ENCODE measurements at regions of chr20 and their contacts with region 1.

Region 1: GRCh38 chr20:733861-734260 is 34.4 kb downstream of the SLC52A3 start:
- DNase-seq: no peak
- H3K4me3 ChIP-seq: no peak overlapping the region
- H3K27ac ChIP-seq: no peak overlapping the region
- H3K4me1 ChIP-seq: peaks cover 0 to 3% of the 10 kb centered on the region in 2 donors
- H3K27me3 ChIP-seq: no peaks in the 10 kb centered on the region
- CTCF ChIP-seq: no peak
- POLR2A ChIP-seq: no peak

Region 2: DNA sequence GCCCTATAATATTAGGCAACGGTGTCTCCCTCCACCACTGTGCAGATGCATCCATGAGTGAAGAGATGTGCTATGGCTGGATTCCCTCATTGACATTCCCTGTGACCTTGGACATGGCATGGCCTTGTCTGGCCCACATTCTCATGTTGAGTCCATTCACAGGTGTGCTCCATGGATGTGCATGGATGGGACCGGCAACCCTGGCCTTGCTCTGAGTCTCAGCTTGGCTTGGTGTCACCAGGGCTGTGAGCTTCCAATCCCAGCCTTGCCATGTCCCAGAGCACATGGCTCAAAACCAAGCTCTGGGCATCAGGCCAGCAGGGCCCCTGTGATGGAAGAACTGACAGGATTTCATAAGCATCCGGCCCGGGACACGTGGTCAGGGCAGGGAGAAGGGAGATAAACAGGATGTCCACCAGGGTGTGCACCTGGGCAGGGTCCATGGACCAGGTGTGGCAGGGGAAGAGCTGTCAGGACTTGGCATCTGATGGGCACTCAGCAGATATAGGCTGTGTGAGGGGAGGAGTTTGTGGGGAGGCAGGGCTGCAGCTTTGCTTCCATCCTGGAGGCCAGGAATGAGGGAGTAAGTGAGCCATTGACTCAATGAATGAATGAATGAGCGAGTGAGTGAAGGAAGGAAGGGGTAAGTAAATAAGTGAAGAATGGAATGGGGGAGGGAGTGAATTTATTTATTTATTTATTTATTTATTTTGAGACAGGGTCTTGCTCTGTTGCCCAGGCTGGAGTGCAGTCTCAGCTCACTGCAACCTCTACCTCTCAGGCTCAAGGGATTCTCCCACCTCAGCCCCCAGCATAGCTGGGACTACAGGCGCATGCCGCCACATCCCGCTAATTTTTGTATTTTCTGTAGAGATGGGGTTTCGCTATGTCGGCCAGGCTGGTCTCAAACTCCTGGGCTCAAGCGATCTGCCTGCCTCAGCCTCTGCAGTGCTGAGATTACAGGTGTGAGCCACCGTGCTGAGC is 371.3 kb before region 1 on chr20:
- intact Hi-C with region 1: loop called (anchors 10 kb)
- DNase-seq: peak; percentile 92 to 96
- H3K4me3 ChIP-seq: no peak overlapping the region
- H3K27ac ChIP-seq: no peak overlapping the region
- H3K4me1 ChIP-seq: peaks cover 24 to 33% of the 10 kb centered on the region in 2 donors
- H3K27me3 ChIP-seq: no peaks in the 10 kb centered on the region
- CTCF ChIP-seq: peak in 4 of 6 experiments; percentile 37 to 80 (median 52)
- POLR2A ChIP-seq: no peak

Region 3: GRCh38 chr20:561437-562231 is 172.2 kb before region 1 on chr20:
- intact Hi-C with region 1: loop called (anchors 10 kb)
- DNase-seq: peak; percentile 44 to 51
- H3K4me3 ChIP-seq: no peak overlapping the region
- H3K27ac ChIP-seq: no peak overlapping the region
- H3K4me1 ChIP-seq: no peaks in the 10 kb centered on the region
- H3K27me3 ChIP-seq: no peaks in the 10 kb centered on the region
- CTCF ChIP-seq: peak; percentile 70 to 89 (median 76)
- POLR2A ChIP-seq: no peak

Region 4: GRCh38 chr20:1020614-1021013 is 286.8 kb after region 1 on chr20:
- intact Hi-C with region 1: no loop called
- DNase-seq: no peak
- H3K4me3 ChIP-seq: no peak overlapping the region
- H3K27ac ChIP-seq: no peak overlapping the region
- H3K4me1 ChIP-seq: no peaks in the 10 kb centered on the region
- H3K27me3 ChIP-seq: no peaks in the 10 kb centered on the region
- CTCF ChIP-seq: no peak
- POLR2A ChIP-seq: no peak